HCT116 (cell line): ENCODE measurements at regions of chr1 and their contacts with region 1.

Region 1: DNA sequence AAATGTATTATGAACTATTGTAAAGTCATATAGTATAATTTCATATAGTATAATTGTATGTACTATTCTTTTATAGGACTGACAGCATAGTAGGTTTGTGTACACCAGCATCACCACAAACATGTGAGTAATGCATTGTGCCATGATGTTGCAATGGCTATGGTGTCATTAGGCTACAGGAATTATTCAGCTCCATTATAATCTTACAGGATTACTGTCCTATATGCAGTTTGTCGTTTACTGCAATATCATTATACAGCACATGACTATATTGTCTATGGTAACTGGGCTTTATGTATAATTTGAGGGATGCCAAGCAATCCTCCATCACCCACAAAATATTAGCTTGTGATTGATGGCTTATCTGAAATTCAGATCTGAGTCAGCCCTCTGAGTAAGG is 54.2 kb upstream of the PBX1 start:
- DNase-seq: no peak
- ATAC-seq: no peak
- H3K4me3 ChIP-seq: no peak overlapping the region
- H3K27ac ChIP-seq: no peak overlapping the region
- H3K4me1 ChIP-seq: no peaks in the 10 kb centered on the region
- H3K27me3 ChIP-seq: no peaks in the 10 kb centered on the region; the same call in 1 of the 2 replicates
- CTCF ChIP-seq: no peak
- POLR2A ChIP-seq: no peak
- RAD21 ChIP-seq: no peak

Region 2: DNA sequence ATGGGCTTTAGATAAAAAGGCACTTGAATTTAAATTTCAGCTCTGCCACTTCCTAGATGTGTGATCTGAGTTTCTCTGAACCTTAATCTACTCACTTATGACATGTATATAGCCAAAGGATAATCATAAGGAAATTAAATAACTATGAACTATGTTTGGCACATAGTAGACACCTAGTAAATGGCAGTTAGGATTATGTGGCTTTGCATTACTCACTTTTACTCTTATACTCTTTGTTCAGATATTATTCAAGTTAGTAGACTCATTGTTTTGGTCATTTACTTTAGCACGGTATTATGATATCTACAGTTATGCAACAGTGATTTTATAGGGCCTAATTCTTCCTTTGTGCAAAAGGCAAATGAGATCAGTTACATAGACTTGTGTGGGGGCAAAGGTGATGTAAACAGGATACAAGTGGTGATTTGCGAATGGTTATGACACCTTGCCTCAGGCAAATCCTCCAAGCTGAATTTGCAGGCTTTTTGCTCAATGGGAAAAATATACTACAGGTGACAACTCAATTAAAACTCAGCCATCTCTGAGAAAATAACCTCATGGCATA is 243.0 kb before region 1 on chr1:
- CTCF ChIA-PET with region 1: no interaction called
- POLR2A ChIA-PET with region 1: no interaction called
- RAD21 ChIA-PET with region 1: no interaction called
- intact Hi-C with region 1: no loop called
- DNase-seq: no peak
- ATAC-seq: no peak
- H3K4me3 ChIP-seq: no peak overlapping the region
- H3K27ac ChIP-seq: no peak overlapping the region
- H3K4me1 ChIP-seq: no peaks in the 10 kb centered on the region
- H3K27me3 ChIP-seq: no peaks in the 10 kb centered on the region
- CTCF ChIP-seq: no peak
- POLR2A ChIP-seq: no peak
- RAD21 ChIP-seq: no peak

Region 3: GRCh38 chr1:164440232-164440631 is 64.5 kb before region 1 on chr1:
- CTCF ChIA-PET with region 1: no interaction called
- POLR2A ChIA-PET with region 1: no interaction called
- RAD21 ChIA-PET with region 1: no interaction called
- intact Hi-C with region 1: loop called (anchors 10 kb)
- DNase-seq: no peak
- ATAC-seq: peak; percentile 98
- H3K4me3 ChIP-seq: no peak overlapping the region
- H3K27ac ChIP-seq: no peak overlapping the region
- H3K4me1 ChIP-seq: peaks cover 3 to 9% of the 10 kb centered on the region in 2 experiments; a peak in 3 of 4 replicates
- H3K27me3 ChIP-seq: no peaks in the 10 kb centered on the region
- CTCF ChIP-seq: peak in 2 of 3 experiments; percentile 60 to 65; a peak in 4 of 6 replicates
- POLR2A ChIP-seq: no peak
- RAD21 ChIP-seq: peak; percentile 58